Cardiac septum (tissue), 1 donor: ENCODE measurements at regions of chr3 and their contacts with region 1.

Region 1: DNA sequence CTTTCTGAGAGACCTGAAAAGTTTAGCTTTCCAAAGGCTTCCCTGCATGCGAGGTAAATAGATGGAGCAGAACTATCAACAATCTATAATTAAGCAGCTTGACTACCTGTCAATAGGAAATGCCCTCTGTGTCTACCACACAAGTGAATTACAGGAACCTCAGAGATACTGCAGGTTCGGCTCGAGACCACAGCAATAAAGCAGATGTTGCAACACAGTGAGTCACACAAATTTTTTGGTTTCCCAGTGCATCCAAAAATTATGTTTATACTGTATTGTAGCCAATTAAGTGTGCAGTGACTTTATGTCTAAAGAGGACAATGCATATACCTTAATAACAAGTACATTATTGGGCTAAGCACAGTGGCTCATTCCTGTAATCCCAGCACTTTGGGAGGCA is 252.0 kb downstream of the UBE2E2 start:
- DNase-seq: no peak

Region 2: DNA sequence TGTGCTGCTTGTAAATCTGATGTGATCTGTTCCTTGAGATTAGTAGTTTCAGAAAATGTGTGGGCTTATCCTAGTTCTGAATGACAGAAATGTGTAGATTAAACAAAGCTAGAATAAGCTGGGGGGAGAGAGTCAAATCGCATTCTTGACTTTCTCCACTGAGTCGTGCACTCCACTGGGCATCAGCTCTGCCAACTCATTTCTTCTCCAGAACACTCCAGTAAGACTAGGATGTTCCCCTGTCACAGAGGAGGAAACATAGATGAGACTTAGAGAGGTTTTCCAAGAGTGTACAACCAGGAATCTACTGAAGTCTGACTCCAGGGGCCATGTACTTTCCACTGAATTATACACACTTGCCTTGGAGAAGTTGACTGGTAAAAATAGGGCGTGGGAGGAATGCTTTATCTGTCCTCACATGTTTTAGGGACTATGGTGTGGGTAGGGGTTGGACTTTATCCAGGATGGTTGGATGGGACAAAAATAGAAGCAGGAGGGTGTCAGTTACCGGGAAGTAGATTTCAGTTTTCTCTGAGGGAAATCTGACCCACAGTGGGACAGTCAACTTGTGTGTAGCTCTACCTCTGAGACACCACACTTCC is 46.2 kb after region 1 on chr3:
- intact Hi-C with region 1: loop called (anchors 1 kb)
- DNase-seq: no peak

Region 3: GRCh38 chr3:24086617-24087404 is 631.7 kb after region 1 on chr3:
- intact Hi-C with region 1: no loop called
- DNase-seq: no peak